Activated T-helper 1 cell treated with anti-CD3 and anti-CD28 coated beads, Interleukin-12 subunit alpha, Interleukin-12 subunit beta, Interleukin-2, Interleukin-4 antibody, amounts not matched to agents 30 ng/mL and 10 ng/mL and 1 ng/mL, durations not matched to agents 14 hours and 24 hours and 36 hours (primary cell): ENCODE measurements at regions of chr9 and their contacts with region 1.

Region 1: GRCh38 chr9:124257844-124258606 is at the start of gene NEK6:
- DNase-seq: no peak
- H3K4me3 Mint-ChIP-seq: peak within 1 kb of the TSS; percentile 89
- H3K27ac Mint-ChIP-seq: peak within 1 kb of the TSS; percentile 82
- H3K4me1 Mint-ChIP-seq: peaks cover 54% of the 10 kb centered on the region
- H3K27me3 Mint-ChIP-seq: peaks cover 37% of the 10 kb centered on the region
- total RNA-seq, gene NEK6: 17.4 and 21.0 TPM in 2 replicates

Region 2: GRCh38 chr9:124126571-124127289 is 131.3 kb before region 1 on chr9:
- intact Hi-C with region 1: loop called (anchors 1 kb)
- DNase-seq: peak; percentile 61
- H3K4me3 Mint-ChIP-seq: no peak overlapping the region
- H3K27ac Mint-ChIP-seq: no peak overlapping the region
- H3K4me1 Mint-ChIP-seq: peaks cover 5% of the 10 kb centered on the region
- H3K27me3 Mint-ChIP-seq: peaks cover 8% of the 10 kb centered on the region

Region 3: DNA sequence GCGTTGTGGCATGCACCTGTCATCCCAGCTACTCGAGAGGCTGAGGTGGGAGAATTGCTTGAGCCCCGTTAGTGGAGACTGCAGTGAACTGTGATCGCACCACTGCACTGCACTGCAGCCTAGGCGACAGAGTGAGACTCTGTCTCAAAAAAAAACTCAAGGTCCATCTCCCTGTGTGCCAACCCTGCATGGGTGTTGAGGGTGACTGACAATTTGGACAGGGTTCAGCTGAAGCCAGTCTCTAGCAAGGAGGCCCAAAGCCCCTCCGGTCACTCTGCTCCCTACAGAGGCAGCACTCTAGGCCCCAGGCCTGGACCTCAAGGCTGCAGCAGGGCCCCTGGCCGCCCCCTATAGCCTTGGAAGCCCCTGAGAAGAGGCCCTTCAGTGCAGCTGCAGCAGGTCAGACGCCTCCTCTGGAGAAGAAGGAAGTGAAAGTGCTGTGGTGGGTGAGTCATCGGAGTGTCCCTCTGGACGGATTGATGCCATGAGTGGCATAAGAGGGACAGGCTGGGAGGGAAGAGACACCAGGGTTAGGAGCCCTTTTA is 39.5 kb before region 1 on chr9:
- intact Hi-C with region 1: loop called (anchors 1 kb)
- DNase-seq: peak; percentile 26
- H3K4me3 Mint-ChIP-seq: no peak overlapping the region
- H3K27ac Mint-ChIP-seq: peak overlapping the region; percentile 69
- H3K4me1 Mint-ChIP-seq: peaks cover 59% of the 10 kb centered on the region
- H3K27me3 Mint-ChIP-seq: peaks cover 5% of the 10 kb centered on the region

Region 4: GRCh38 chr9:124285903-124286291 is 27.9 kb after region 1 on chr9:
- intact Hi-C with region 1: loop called (anchors 1 kb)
- DNase-seq: no peak
- H3K4me3 Mint-ChIP-seq: peak overlapping the region; percentile 67
- H3K27ac Mint-ChIP-seq: peak overlapping the region; percentile 85
- H3K4me1 Mint-ChIP-seq: peaks cover 21% of the 10 kb centered on the region
- H3K27me3 Mint-ChIP-seq: no peaks in the 10 kb centered on the region

Region 5: DNA sequence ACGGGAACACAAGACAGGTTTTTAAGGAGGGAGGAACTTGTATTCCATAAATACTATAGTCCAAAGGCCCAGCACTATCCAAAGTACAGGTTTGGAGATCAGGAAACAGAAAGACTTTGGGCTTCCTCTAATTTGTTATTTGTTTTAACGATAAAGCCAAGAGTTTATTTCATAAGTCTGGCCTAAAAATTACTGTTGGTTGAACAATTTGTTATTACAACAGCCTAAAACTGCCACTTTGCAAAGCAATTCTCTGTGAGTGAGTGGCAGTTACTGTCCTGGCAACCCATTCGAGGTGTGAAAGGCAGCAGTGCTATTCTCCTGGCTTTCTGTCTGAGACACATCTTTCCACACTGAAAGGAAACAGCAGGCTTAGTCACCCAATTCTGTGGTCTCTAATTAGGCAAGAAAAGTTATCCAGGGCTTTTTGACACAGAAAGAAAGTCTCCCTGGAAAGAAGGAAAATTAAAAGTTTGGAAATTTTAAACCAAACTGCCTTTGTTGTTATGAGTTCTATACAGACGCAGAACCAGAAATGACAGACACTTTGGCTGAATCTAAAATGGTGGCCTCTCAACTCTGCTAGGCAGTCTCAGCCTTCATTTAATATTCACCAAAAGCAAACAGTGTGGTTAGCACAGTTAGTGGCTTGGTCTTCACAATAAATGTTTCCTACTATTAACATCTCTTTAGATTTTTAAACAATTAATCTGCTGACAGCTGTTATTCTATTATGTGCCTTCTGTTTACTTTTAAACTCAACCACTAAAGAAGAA is 123.3 kb after region 1 on chr9:
- intact Hi-C with region 1: loop called (anchors 1 kb)
- DNase-seq: no peak
- H3K4me3 Mint-ChIP-seq: no peak overlapping the region
- H3K27ac Mint-ChIP-seq: no peak overlapping the region
- H3K4me1 Mint-ChIP-seq: no peaks in the 10 kb centered on the region
- H3K27me3 Mint-ChIP-seq: no peaks in the 10 kb centered on the region